ENCODE measurements at regions of chr2 and their contacts with region 1.

Region 1: DNA sequence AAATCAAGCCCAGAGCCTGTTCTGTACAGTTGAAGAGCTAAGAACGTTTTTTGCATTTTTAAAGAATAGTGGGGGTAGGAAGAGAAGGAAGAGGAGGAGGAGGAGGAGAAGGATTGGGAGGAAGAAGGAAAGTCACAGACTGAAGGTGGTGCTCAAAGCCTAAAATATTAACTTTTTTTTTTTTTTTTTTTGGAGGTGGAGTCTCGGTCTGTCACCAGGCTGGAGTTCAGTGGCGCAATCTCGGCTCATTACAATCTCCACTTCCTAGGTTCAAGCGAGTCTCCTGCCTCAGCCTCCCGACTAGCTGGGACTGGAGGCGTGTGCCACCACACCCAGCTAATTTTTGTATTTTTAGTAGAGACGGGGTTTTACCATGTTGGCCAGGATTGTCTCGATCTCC is 18.3 kb upstream of the KLHL29 start:
- DNase-seq: no peak

Region 2: DNA sequence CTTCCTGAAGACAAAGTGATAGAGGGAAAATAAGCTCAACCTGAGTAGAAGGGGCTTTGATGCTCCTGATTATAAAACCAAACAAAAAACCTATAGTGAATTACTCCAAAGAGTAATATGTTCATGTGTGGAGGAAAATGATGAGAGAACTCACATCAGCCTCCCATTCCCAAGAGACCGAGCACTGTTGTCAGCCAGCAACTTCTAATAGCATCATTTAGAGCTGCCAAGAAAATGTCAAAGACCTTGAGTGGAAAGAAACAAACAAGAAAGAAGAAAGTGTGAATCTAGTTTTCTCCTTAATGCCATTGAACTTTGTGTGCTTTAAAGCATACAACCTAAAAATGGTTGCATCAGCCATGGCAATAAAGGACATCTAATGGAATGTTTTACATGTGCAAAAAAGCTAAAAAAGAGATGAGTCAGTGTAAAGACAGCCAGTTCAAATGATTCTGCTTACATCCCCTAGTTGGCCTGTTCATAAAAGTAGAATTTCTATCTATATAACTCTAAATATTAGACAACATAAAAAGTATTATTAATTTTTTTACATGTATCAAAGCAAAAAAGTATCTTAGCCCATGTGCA is 1176.7 kb before region 1 on chr2:
- CTCF ChIA-PET with region 1: no interaction called
- POLR2A ChIA-PET with region 1: no interaction called
- DNase-seq: no peak

Region 3: DNA sequence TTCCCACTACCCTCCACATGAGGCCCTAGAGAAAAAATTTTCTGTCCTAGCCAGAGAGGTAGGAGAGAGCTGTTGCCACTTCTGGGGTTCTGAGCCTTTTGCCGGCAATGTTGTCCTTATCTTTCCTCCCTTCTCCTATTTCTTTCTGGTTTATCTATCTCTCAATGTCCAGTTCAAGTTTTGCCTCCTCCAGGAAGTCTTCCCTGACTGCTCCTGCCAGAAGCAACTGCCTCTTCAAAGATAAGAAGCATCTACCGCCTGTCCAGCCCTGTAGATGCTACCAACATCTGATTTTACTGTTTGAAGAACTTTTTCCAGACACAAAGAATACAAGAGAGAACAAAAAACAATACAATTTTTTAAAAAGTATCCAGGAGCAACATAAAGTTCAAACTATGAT is 202.5 kb before region 1 on chr2:
- CTCF ChIA-PET with region 1: interaction called, 13 read pairs
- POLR2A ChIA-PET with region 1: no interaction called
- DNase-seq: no peak

Region 4: GRCh38 chr2:23293063-23293462 is 73.7 kb before region 1 on chr2:
- CTCF ChIA-PET with region 1: no interaction called
- POLR2A ChIA-PET with region 1: no interaction called
- DNase-seq: no peak

Measured in HEK293T (cell line).